Calu3 (cell line): ENCODE measurements at regions of chrX and their contacts with region 1.

Region 1: GRCh38 chrX:55717521-55718497 is at the start of gene RRAGB:
- DNase-seq: peak; percentile 94
- H3K4me3 Mint-ChIP-seq: peak within 1 kb of the TSS; percentile 84
- H3K27ac Mint-ChIP-seq: peak within 1 kb of the TSS; percentile 82
- H3K4me1 Mint-ChIP-seq: peaks cover 9% of the 10 kb centered on the region
- H3K27me3 Mint-ChIP-seq: no peaks in the 10 kb centered on the region
- CTCF ChIP-seq: peak; percentile 53
- total RNA-seq, gene RRAGB: 16.5 and 19.3 TPM in 2 replicates

Region 2: GRCh38 chrX:54482839-54483593 is 1234.8 kb before region 1 on chrX:
- CTCF ChIA-PET with region 1: no interaction called
- intact Hi-C with region 1: no loop called
- DNase-seq: no peak
- H3K4me3 Mint-ChIP-seq: no peak overlapping the region
- H3K27ac Mint-ChIP-seq: no peak overlapping the region
- H3K4me1 Mint-ChIP-seq: no peaks in the 10 kb centered on the region
- H3K27me3 Mint-ChIP-seq: peaks cover 16% of the 10 kb centered on the region
- CTCF ChIP-seq: no peak

Region 3: GRCh38 chrX:55135171-55135570 is 582.6 kb before region 1 on chrX:
- CTCF ChIA-PET with region 1: interaction called, 4 read pairs
- intact Hi-C with region 1: loop called (anchors 1 kb)
- DNase-seq: peak; percentile 49
- H3K4me3 Mint-ChIP-seq: no peak overlapping the region
- H3K27ac Mint-ChIP-seq: no peak overlapping the region
- H3K4me1 Mint-ChIP-seq: no peaks in the 10 kb centered on the region
- H3K27me3 Mint-ChIP-seq: peaks cover 20% of the 10 kb centered on the region
- CTCF ChIP-seq: peak; percentile 41

Region 4: DNA sequence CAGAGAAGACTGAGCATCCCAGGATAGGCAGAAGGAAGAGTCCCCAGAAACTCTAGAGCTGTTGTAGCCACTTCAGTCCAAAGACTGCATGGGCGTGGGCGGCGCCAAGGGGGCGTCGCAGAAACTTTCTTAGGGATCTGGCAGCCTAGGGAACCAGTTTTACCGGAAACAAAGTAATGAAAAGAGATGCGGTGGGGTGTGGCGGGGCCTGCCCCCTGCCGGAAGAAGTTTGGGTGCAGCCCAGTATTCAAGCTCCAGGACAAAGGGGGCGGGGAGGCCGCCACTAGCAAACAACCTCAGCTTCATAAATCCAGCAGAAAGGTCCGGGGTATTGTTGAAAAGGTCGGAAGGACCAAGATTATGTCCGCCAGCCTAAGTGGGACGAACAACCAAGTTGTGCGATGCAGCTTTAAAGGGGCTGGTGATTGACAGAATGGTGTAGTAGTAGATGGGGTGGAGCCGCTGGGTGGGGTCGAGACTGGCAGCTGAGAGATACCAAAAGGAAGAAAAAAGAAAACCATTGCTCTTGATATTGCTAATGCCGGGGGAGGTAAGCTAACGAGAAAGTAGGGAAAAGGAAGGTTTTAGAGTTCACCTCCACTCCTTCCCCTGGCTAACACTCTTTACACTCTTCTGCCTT is 190.3 kb after region 1 on chrX:
- CTCF ChIA-PET with region 1: interaction called, 3 read pairs
- intact Hi-C with region 1: loop called (anchors 5 kb)
- DNase-seq: peak; percentile 83
- H3K4me3 Mint-ChIP-seq: peak overlapping the region; percentile 78
- H3K27ac Mint-ChIP-seq: peak overlapping the region; percentile 79
- H3K4me1 Mint-ChIP-seq: peaks cover 32% of the 10 kb centered on the region
- H3K27me3 Mint-ChIP-seq: no peaks in the 10 kb centered on the region
- CTCF ChIP-seq: peak; percentile 56

Region 5: GRCh38 chrX:56248492-56248891 is 530.7 kb after region 1 on chrX:
- CTCF ChIA-PET with region 1: interaction called, 6 read pairs
- intact Hi-C with region 1: loop called (anchors 10 kb)
- DNase-seq: peak; percentile 57
- H3K4me3 Mint-ChIP-seq: no peak overlapping the region
- H3K27ac Mint-ChIP-seq: no peak overlapping the region
- H3K4me1 Mint-ChIP-seq: no peaks in the 10 kb centered on the region
- H3K27me3 Mint-ChIP-seq: no peaks in the 10 kb centered on the region
- CTCF ChIP-seq: no peak

Region 6: GRCh38 chrX:56729152-56729850 is 1011.5 kb after region 1 on chrX and contains the start of gene NBDY:
- CTCF ChIA-PET with region 1: no interaction called
- intact Hi-C with region 1: loop called (anchors 5 kb)
- DNase-seq: peak; percentile 37
- H3K4me3 Mint-ChIP-seq: peak within 1 kb of the TSS; percentile 83
- H3K27ac Mint-ChIP-seq: peak within 1 kb of the TSS; percentile 77
- H3K4me1 Mint-ChIP-seq: peaks cover 8% of the 10 kb centered on the region
- H3K27me3 Mint-ChIP-seq: no peaks in the 10 kb centered on the region
- CTCF ChIP-seq: no peak
- total RNA-seq, gene NBDY: 57.1 and 65.0 TPM in 2 replicates